Caco-2 (cell line): ENCODE measurements at regions of chr1 and their contacts with region 1.

Region 1: GRCh38 chr1:16155532-16156410 is at the start of gene EPHA2:
- DNase-seq: peak; percentile 92 to 96
- H3K4me3 ChIP-seq: peak within 1 kb of the TSS; percentile 84
- H3K4me3 Mint-ChIP-seq: peak within 1 kb of the TSS; percentile 86
- H3K27ac Mint-ChIP-seq: peak within 1 kb of the TSS; percentile 94
- H3K4me1 ChIP-seq: peaks cover 39% of the 10 kb centered on the region
- H3K4me1 Mint-ChIP-seq: peaks cover 15% of the 10 kb centered on the region
- H3K27me3 ChIP-seq: no peaks in the 10 kb centered on the region
- H3K27me3 Mint-ChIP-seq: no peaks in the 10 kb centered on the region
- CTCF ChIP-seq: no peak
- total RNA-seq, gene EPHA2: 31.2 and 37.8 TPM in 2 replicates

Region 2: DNA sequence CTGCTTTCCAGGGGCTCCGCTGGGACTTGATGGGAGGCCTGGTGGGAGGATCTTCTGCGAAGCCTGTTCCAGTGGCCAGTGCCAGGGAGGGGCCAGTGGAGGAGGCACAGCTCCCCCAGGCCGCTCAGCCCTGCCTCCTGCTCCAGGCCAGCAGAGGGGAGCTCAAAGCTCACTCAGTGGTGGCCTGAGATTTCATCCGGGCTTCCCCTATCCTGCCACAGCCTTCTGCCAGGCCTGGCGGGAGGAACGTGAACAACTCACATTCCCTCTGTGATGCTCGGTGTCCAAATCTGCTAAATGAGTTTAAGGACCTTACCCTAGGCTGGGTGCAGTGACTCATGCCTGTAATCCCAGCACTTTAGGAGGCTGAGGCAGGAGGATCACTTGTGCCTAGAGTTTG is 108.9 kb before region 1 on chr1:
- CTCF ChIA-PET with region 1: no interaction called
- POLR2A ChIA-PET with region 1: no interaction called
- intact Hi-C with region 1: no loop called
- DNase-seq: no peak
- H3K4me3 ChIP-seq: no peak overlapping the region
- H3K4me3 Mint-ChIP-seq: no peak overlapping the region
- H3K27ac Mint-ChIP-seq: no peak overlapping the region
- H3K4me1 ChIP-seq: no peaks in the 10 kb centered on the region
- H3K4me1 Mint-ChIP-seq: no peaks in the 10 kb centered on the region
- H3K27me3 ChIP-seq: no peaks in the 10 kb centered on the region
- H3K27me3 Mint-ChIP-seq: no peaks in the 10 kb centered on the region
- CTCF ChIP-seq: no peak

Region 3: DNA sequence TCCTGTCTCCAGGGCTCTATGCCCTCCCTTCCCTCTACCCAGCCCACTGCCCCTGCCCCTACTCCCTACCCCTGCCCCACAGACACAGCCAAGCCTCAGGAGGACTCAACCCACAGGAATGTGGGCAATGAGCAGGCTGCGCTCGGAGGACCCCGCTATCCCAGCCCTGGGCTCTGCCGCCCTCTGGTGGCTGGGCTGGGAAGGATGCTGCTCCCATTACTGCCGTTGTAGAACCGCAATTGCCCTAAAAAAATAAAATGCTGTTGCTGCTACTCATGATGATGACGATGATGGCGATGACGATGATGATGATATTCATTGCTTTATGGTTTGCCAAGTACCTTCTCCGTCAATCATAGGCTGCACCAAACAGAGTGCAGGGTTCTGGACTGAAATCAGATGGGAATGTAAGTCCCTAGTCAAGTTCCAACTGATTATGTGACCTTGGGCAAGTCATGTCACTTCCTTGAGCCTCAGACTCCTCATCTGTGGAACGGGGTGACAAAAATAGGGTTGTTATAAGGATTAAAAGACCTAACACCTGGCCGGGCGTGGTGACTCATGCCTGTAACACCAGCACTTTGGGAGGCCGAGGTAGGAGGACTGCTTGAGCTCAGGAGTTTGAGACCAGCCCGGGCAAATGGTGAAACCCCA is 32.1 kb after region 1 on chr1:
- CTCF ChIA-PET with region 1: interaction called, 3 read pairs
- POLR2A ChIA-PET with region 1: no interaction called
- intact Hi-C with region 1: loop called (anchors 1 kb)
- DNase-seq: peak; percentile 73 to 85
- H3K4me3 ChIP-seq: no peak overlapping the region
- H3K4me3 Mint-ChIP-seq: no peak overlapping the region
- H3K27ac Mint-ChIP-seq: no peak overlapping the region
- H3K4me1 ChIP-seq: peaks cover 26% of the 10 kb centered on the region
- H3K4me1 Mint-ChIP-seq: peaks cover 15% of the 10 kb centered on the region
- H3K27me3 ChIP-seq: no peaks in the 10 kb centered on the region
- H3K27me3 Mint-ChIP-seq: no peaks in the 10 kb centered on the region
- CTCF ChIP-seq: peak; percentile 85 to 89